AG04449 (cell line): ENCODE measurements at regions of chr17 and their contacts with region 1.

Region 1: DNA sequence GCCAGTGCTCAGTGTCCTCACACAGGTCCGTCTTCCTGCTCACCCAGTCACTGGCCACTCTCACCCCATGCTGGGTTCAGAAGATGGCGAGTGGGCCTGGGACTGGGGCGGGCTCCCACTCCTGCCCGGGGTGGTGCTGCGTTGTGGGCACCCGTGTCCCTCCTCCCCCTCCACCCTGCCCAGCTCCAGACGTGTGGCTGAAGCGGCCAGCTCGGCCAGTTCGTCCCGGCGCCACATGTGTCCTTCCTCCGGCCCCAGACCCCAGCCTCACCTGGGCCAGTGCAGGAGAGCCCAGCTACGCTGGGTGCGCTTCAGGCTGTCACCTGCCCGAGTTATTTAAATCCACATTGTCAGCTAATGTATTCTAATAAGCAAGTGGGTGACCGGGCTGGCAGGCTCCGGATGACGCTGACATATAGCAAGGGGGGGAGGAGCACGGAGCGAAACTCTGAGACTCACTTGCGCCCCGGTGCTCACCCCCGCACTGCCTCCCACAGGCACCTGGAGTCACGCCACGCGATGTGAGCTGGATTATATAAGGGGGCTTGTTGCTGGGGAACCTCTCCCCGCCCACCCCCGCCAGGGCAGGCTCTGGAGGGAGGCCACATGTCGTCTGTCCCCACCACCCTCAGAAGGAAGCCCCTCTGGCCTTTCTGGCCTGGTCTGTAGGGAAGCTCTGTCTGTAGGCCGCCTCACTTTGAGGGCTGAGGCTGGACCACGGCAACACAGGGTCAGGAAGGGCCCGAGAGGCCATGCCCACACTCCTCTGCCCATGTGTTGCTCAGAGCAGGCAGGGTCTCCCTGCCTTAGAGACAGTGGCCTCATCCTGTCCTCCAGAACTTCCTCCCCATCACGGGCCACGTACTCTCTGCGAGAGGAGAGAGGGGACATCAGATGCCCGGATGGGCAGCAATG is 7.1 kb upstream of the BAIAP2 start:
- DNase-seq: no peak
- H3K4me3 ChIP-seq: no peak overlapping the region
- CTCF ChIP-seq: no peak

Region 2: GRCh38 chr17:81040791-81041337 is 13.0 kb after region 1 on chr17:
- CTCF ChIA-PET with region 1: interaction called, 17 read pairs
- POLR2A ChIA-PET with region 1: no interaction called
- DNase-seq: no peak
- H3K4me3 ChIP-seq: no peak overlapping the region
- CTCF ChIP-seq: peak; percentile 53